Psoas muscle (tissue), 8 donors: ENCODE measurements at regions of chr18 and their contacts with region 1.

Region 1: GRCh38 chr18:44927127-44927849 is 246.6 kb downstream of the SETBP1 start:
- DNase-seq: no peak
- ATAC-seq: peak; percentile 68 to 93 (median 82)
- H3K4me3 ChIP-seq: no peak overlapping the region
- H3K27ac ChIP-seq: peak overlapping the region; percentile 36
- H3K4me1 ChIP-seq: peaks cover 21% of the 10 kb centered on the region
- H3K27me3 ChIP-seq: no peaks in the 10 kb centered on the region
- CTCF ChIP-seq: no peak

Region 2: GRCh38 chr18:44325903-44326635 is 601.2 kb before region 1 on chr18:
- intact Hi-C with region 1: no loop called
- DNase-seq: peak; percentile 20 to 49
- ATAC-seq: no peak
- H3K4me3 ChIP-seq: no peak overlapping the region
- H3K27ac ChIP-seq: no peak overlapping the region
- H3K4me1 ChIP-seq: no peaks in the 10 kb centered on the region
- H3K27me3 ChIP-seq: no peaks in the 10 kb centered on the region
- CTCF ChIP-seq: peak; percentile 45

Region 3: DNA sequence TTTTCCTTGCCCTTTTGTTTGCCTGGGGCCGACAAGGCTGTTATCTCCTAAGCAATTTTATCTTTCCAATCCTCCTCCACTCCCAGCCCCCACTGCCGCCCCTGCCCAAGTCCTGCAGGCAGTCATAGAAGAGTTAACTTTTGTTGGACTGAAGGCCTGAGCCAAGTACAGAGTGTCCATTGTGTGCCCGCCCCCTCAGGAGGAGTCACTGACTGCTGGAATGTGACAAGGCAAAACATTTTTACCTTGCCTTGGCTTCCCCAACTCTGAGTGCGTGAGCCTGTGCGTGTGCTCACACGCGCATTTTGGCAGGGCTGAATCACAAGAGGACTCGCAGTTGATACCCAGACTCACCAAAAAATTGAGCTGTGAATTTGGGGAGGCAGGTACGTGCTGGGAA is 230.4 kb before region 1 on chr18:
- intact Hi-C with region 1: no loop called
- DNase-seq: peak; percentile 31 to 67
- ATAC-seq: peak; percentile 68 to 88 (median 86)
- H3K4me3 ChIP-seq: peak overlapping the region; percentile 55
- H3K27ac ChIP-seq: peak overlapping the region; percentile 75
- H3K4me1 ChIP-seq: peaks cover 53% of the 10 kb centered on the region
- H3K27me3 ChIP-seq: no peaks in the 10 kb centered on the region
- CTCF ChIP-seq: no peak

Region 4: GRCh38 chr18:44973282-44973681 is 46.0 kb after region 1 on chr18:
- intact Hi-C with region 1: no loop called
- DNase-seq: no peak
- ATAC-seq: peak in 2 of 4 donors; percentile 45 to 58
- H3K4me3 ChIP-seq: no peak overlapping the region
- H3K27ac ChIP-seq: no peak overlapping the region
- H3K4me1 ChIP-seq: peaks cover 24% of the 10 kb centered on the region
- H3K27me3 ChIP-seq: no peaks in the 10 kb centered on the region
- CTCF ChIP-seq: peak; percentile 23

Region 5: DNA sequence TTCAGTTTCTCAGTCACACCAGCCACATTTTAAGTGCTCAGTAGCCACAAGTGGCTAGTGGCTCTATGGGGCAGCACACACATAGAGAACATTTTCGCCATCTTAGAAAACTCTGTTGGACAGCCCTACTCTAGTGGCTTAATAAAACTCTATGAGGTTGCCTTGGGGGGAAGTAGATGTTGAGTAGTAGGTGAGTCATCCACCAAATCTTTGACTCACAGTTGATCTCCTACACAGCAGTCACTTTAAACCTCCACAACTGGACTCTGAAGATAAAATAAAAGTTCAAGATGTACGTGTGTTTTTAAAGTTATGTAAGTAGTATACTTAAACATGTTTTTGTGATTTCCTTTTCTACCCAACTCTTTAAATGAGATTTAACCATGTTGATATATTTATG is 132.4 kb after region 1 on chr18:
- intact Hi-C with region 1: loop called in 1 of 2 experiments (anchors 10 kb)
- DNase-seq: no peak
- ATAC-seq: peak; percentile 44 to 89 (median 80)
- H3K4me3 ChIP-seq: no peak overlapping the region
- H3K27ac ChIP-seq: no peak overlapping the region
- H3K4me1 ChIP-seq: peaks cover 5% of the 10 kb centered on the region
- H3K27me3 ChIP-seq: no peaks in the 10 kb centered on the region
- CTCF ChIP-seq: no peak

Region 6: GRCh38 chr18:45212181-45213039 is 285.1 kb after region 1 on chr18:
- intact Hi-C with region 1: loop called in 1 of 2 experiments (anchors 10 kb)
- DNase-seq: peak; percentile 74 to 87
- ATAC-seq: peak; percentile 93 to 100 (median 100)
- H3K4me3 ChIP-seq: no peak overlapping the region
- H3K27ac ChIP-seq: no peak overlapping the region
- H3K4me1 ChIP-seq: no peaks in the 10 kb centered on the region
- H3K27me3 ChIP-seq: no peaks in the 10 kb centered on the region
- CTCF ChIP-seq: peak; percentile 93

Region 7: GRCh38 chr18:45526114-45526841 is 599.0 kb after region 1 on chr18:
- intact Hi-C with region 1: no loop called
- DNase-seq: no peak
- ATAC-seq: peak in 2 of 4 donors; percentile 36 to 47
- H3K4me3 ChIP-seq: no peak overlapping the region
- H3K27ac ChIP-seq: no peak overlapping the region
- H3K4me1 ChIP-seq: peaks cover 9% of the 10 kb centered on the region
- H3K27me3 ChIP-seq: no peaks in the 10 kb centered on the region
- CTCF ChIP-seq: peak; percentile 20